Thyroid gland (tissue), 4 donors: ENCODE measurements at regions of chr14 and their contacts with region 1.

Region 1: GRCh38 chr14:88168498-88169165 is 154.4 kb downstream of the KCNK10 start:
- DNase-seq: peak; percentile 14 to 16
- H3K4me3 ChIP-seq: no peak overlapping the region
- H3K27ac ChIP-seq: no peak overlapping the region
- H3K4me1 ChIP-seq: no peaks in the 10 kb centered on the region
- H3K27me3 ChIP-seq: no peaks in the 10 kb centered on the region
- CTCF ChIP-seq: peak in 5 of 6 experiments; percentile 16 to 59 (median 35)
- POLR2A ChIP-seq: no peak

Region 2: DNA sequence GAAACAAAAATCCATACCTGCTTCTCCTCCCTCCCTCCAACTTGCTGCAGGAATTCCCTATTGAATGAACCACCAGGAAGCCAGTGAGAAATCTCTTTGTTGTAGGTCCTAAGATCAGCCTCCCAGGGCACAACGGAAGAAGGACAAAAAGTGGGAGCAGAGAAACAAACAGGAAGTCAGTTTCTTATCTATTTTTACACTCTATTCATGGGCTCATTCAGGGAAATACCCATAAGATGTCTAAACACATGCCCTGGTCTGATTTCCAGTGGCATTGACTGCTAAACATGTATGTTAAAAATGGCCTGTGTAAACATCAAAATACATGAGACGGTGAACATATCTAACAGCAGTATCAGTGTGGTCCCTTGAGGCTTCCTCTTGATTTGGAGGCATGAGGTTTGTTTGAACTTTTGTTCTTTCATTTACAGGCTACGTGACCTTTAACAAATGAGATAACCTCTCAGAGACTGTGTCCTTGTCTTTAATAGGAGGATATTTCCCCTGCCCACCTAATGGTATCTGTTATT is 144.9 kb before region 1 on chr14:
- intact Hi-C with region 1: loop called (anchors 10 kb)
- DNase-seq: no peak
- H3K4me3 ChIP-seq: no peak overlapping the region
- H3K27ac ChIP-seq: no peak overlapping the region
- H3K4me1 ChIP-seq: no peaks in the 10 kb centered on the region
- H3K27me3 ChIP-seq: no peaks in the 10 kb centered on the region
- CTCF ChIP-seq: no peak
- POLR2A ChIP-seq: no peak